ENCODE measurements at regions of chrX and their contacts with region 1.

Region 1: GRCh38 chrX:112642349-112642748 is 37.4 kb downstream of the LHFPL1 start:
- DNase-seq: peak; percentile 36
- H3K4me3 Mint-ChIP-seq: no peak overlapping the region
- H3K27ac Mint-ChIP-seq: no peak overlapping the region
- H3K4me1 Mint-ChIP-seq: peaks cover 24% of the 10 kb centered on the region
- H3K27me3 Mint-ChIP-seq: no peaks in the 10 kb centered on the region

Region 2: DNA sequence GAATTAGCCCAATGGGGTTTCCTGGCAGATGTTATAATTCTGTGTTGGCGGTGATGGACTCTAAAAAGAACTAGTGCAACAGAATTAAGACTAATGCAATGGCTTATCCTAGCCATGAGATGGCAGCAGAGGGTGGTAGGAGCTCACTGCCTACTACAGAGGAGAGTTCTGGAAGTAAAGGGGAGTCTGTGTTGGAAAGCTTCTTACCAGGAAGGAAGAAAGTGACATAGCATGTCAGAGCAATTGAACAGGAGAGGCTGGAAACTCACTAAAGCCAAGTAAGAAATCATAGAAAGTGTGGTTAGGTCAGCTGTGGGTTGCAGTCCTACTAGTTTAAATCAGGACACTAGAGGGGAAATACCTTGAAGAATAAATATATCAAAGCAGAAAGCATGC is 772.7 kb before region 1 on chrX:
- CTCF ChIA-PET with region 1: no interaction called
- POLR2A ChIA-PET with region 1: no interaction called
- intact Hi-C with region 1: loop called (anchors 10 kb)
- DNase-seq: peak; percentile 8
- H3K4me3 Mint-ChIP-seq: no peak overlapping the region
- H3K27ac Mint-ChIP-seq: no peak overlapping the region
- H3K4me1 Mint-ChIP-seq: no peaks in the 10 kb centered on the region
- H3K27me3 Mint-ChIP-seq: peaks cover 2% of the 10 kb centered on the region

Region 3: GRCh38 chrX:112678831-112679230 is 36.5 kb after region 1 on chrX:
- CTCF ChIA-PET with region 1: no interaction called
- POLR2A ChIA-PET with region 1: no interaction called
- intact Hi-C with region 1: loop called (anchors 1 kb)
- DNase-seq: no peak
- H3K4me3 Mint-ChIP-seq: peak overlapping the region; percentile 69
- H3K27ac Mint-ChIP-seq: peak overlapping the region; percentile 69
- H3K4me1 Mint-ChIP-seq: peaks cover 34% of the 10 kb centered on the region
- H3K27me3 Mint-ChIP-seq: no peaks in the 10 kb centered on the region

Region 4: DNA sequence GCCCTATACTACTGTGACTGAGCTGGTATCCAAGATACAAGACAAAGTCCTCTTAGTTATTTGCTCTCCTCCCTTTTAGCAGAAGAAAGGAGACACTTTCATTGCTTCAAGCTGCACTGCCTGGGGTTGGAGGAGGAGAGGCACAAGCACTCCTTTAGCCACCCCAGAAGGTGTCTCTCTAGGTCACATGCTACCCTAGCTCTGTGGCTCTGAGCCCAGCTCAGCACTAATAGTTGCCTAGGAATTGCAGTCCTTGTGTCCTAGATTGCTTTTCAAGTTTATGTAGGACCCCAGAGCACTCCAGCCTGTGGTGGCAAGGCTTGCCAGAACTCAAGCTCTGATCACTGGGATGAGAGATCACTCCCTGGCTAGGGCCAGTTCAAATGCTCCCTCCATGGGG is 61.8 kb after region 1 on chrX:
- CTCF ChIA-PET with region 1: no interaction called
- POLR2A ChIA-PET with region 1: no interaction called
- intact Hi-C with region 1: no loop called
- DNase-seq: no peak
- H3K4me3 Mint-ChIP-seq: no peak overlapping the region
- H3K27ac Mint-ChIP-seq: no peak overlapping the region
- H3K4me1 Mint-ChIP-seq: no peaks in the 10 kb centered on the region
- H3K27me3 Mint-ChIP-seq: peaks cover 3% of the 10 kb centered on the region

Region 5: DNA sequence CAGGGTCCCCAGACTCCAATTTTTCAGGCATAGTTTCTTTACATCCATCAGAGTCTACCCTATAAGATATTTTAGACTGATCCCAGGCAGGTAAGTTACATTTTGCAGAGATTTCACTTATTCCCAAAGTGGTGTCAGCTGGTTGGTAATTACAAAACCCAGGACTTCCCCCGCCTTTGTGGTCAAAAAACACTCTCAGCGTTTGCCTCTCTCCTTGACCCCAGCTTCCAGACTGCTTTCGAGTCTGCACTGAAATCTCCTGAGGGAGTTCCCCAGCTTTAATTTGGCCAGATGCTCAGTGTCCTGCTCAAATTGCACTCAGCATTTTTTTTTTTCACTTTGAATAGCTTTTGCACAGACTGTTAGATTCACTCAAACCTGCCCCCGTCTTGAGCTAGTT is 209.5 kb after region 1 on chrX:
- CTCF ChIA-PET with region 1: no interaction called
- POLR2A ChIA-PET with region 1: no interaction called
- intact Hi-C with region 1: no loop called
- DNase-seq: no peak
- H3K4me3 Mint-ChIP-seq: no peak overlapping the region
- H3K27ac Mint-ChIP-seq: no peak overlapping the region
- H3K4me1 Mint-ChIP-seq: peaks cover 14% of the 10 kb centered on the region
- H3K27me3 Mint-ChIP-seq: peaks cover 9% of the 10 kb centered on the region